Psoas muscle (tissue), 8 donors: ENCODE measurements at regions of chr9 and their contacts with region 1.

Region 1: DNA sequence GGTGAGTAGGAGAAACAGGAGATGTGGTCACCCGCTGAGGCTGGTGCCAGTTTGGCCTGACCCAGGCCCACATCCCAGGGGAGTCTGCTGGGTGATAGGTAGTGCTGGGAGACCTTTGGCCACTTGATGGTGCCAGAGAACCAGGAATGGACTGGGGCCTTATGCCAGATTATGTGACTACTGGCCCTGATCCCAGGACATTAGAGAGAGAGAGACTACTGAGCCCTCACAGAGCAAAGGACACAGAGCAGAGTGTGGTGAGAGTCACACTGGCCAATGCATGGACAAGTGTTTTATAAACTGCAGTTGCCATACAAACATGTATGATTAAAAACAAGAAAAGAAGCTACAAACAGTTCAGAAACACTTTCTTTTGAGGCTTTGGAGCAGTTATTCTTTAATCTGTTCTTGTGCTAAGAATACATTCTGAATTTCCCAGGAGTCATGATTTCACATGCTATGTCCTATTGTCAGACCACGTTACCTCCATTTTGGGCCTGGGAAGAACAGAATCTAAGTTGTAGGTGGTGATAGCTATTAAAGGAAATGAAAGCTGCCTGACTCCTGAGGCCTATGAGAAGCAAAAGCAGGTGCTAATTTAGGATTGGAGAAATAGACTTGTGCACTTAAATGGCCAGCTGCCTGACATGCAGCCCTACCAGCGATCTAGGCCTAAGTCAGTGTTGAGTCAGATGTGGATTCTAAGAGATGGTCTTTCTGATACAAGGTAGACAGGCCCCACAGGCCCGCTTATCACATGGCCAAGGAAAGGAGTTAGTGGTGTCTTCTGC is 32.6 kb upstream of the TMOD1 start:
- DNase-seq: peak; percentile 67 to 86
- ATAC-seq: peak; percentile 98 to 99 (median 98)
- H3K4me3 ChIP-seq: no peak overlapping the region
- H3K27ac ChIP-seq: peak overlapping the region; percentile 77
- H3K4me1 ChIP-seq: peaks cover 13% of the 10 kb centered on the region
- H3K27me3 ChIP-seq: no peaks in the 10 kb centered on the region
- CTCF ChIP-seq: peak; percentile 86

Region 2: DNA sequence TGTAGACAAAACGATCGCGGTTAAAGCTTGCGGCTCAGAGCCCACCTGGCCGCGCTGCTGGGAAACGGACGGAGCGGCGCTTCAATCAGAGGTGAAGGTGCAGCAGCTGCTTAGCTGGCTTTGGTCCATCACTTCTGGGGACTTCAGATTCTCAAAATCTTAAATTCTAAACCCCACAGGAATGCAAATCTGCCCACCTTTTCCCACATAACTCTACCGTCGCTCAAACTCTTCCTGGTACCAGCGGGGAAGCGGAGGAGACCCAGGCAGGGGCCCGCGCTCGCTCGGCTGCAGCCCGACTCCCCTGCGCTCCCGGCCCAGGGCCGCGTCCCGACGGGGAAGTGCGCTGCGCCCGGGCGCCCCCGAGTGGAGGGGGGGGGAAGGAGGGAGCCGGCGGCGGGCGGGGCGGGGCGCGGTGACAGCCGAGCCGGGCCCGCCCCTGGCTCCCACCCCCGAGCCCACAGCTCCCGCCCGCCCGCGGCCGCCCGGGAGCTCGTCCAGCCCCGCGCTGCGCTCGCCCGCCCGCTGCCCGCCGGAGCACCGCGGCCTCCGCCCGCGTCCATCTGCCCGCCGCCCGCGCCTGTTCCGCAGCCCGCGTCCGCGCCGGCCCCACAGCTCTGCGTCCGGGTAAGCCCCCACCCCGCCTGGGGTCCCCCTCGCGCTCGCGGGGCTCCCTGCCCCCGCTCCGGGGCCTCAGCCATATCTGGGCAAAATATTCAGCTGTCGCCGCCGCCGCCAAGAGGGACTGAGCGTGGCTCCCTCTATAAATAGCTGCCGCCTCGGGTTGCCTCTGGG is 32.5 kb after region 1 on chr9 and contains the start of gene TMOD1:
- intact Hi-C with region 1: loop called (anchors 2 to 5 kb)
- DNase-seq: peak; percentile 81 to 90
- ATAC-seq: peak; percentile 81 to 87 (median 82)
- H3K4me3 ChIP-seq: peak within 1 kb of the TSS; percentile 83
- H3K27ac ChIP-seq: peak within 1 kb of the TSS; percentile 96
- H3K4me1 ChIP-seq: peaks cover 33% of the 10 kb centered on the region
- H3K27me3 ChIP-seq: no peaks in the 10 kb centered on the region
- CTCF ChIP-seq: peak; percentile 27
- total RNA-seq, gene TMOD1: 138 to 209 (median 167) TPM

Region 3: GRCh38 chr9:97518909-97519307 is 50.1 kb after region 1 on chr9:
- intact Hi-C with region 1: no loop called
- DNase-seq: peak; percentile 57 to 84
- ATAC-seq: peak; percentile 65 to 85 (median 80)
- H3K4me3 ChIP-seq: peak overlapping the region; percentile 37
- H3K27ac ChIP-seq: peak overlapping the region; percentile 88
- H3K4me1 ChIP-seq: peaks cover 91% of the 10 kb centered on the region
- H3K27me3 ChIP-seq: no peaks in the 10 kb centered on the region
- CTCF ChIP-seq: no peak

Region 4: DNA sequence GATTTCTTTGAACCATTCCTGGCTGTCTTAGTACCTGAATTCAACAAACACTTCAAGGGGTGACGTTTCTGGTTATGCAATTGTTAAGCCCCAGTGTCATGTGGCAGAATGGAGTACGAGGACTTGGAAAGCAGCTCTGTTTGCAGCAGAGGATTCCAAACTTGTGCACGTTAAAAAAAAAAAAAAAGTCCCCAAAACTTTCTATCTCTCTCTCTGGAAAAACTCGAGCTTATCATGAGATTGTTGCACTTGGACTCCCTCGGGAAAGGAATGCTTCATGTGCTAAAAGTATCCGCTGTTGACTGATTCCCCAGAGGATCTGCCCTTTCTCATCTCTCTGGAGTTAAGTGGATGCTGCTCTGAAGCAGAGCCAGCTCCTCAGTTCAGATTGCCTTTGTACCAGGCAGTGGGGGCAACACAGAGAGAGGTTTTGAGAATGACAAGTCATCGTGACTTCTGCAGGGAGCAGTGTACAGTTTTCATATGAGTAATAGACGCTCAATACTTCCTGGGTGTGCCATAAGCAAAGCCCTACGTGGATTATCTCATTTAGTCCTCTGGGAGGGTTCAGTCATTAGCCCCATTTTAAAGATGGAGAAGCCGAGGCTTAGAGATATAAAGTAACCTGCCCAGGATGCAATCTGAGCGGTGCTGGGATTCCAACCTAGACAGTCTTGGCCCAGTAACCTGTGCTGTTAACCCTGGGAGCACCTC is 60.7 kb after region 1 on chr9:
- intact Hi-C with region 1: no loop called
- DNase-seq: peak in 1 of 2 donors; percentile 66
- ATAC-seq: peak; percentile 58 to 79 (median 77)
- H3K4me3 ChIP-seq: no peak overlapping the region
- H3K27ac ChIP-seq: peak overlapping the region; percentile 90
- H3K4me1 ChIP-seq: peaks cover 80% of the 10 kb centered on the region
- H3K27me3 ChIP-seq: no peaks in the 10 kb centered on the region
- CTCF ChIP-seq: no peak

Region 5: GRCh38 chr9:97564291-97565175 is 95.7 kb after region 1 on chr9:
- intact Hi-C with region 1: no loop called
- DNase-seq: peak; percentile 43 to 70
- ATAC-seq: peak; percentile 43 to 64 (median 53)
- H3K4me3 ChIP-seq: no peak overlapping the region
- H3K27ac ChIP-seq: peak overlapping the region; percentile 79
- H3K4me1 ChIP-seq: peaks cover 44% of the 10 kb centered on the region
- H3K27me3 ChIP-seq: no peaks in the 10 kb centered on the region
- CTCF ChIP-seq: no peak

Region 6: GRCh38 chr9:97598461-97599288 is 129.8 kb after region 1 on chr9:
- intact Hi-C with region 1: loop called in 1 of 2 experiments (anchors 5 kb)
- DNase-seq: peak; percentile 66 to 81
- ATAC-seq: peak; percentile 51 to 58 (median 56)
- H3K4me3 ChIP-seq: no peak overlapping the region
- H3K27ac ChIP-seq: peak overlapping the region; percentile 77
- H3K4me1 ChIP-seq: peaks cover 75% of the 10 kb centered on the region
- H3K27me3 ChIP-seq: no peaks in the 10 kb centered on the region
- CTCF ChIP-seq: peak; percentile 83

Region 7: DNA sequence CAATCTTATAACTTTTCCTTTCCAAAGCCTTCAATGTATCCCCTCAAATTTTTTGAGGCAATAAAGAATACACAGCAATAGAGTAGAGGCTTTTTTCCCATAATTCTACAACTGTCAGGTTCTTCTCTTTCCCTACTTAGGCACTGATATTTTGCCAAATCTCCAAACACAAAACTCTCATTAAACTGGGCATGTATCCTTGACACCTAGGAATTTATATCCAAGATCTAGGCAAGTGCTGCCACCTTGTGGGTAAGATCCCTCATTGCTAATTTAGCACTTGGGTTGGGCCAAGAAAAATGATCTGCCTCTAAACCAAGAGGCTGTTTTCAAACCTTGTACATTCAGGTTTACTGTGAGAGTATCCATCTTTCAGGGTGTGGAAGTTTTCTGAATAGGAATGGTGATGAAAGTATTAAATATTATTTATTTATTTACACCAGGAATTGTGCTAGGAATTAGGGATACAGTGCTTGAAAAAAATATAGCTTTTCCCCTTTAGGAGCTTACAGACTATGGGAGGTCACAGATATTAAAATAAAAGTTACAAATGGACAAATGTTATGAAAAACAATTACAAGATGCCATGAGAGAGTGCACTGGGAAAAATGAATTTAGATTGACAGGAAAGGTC is 146.7 kb after region 1 on chr9:
- intact Hi-C with region 1: loop called (anchors 1 to 2 kb)
- DNase-seq: no peak
- ATAC-seq: peak; percentile 67 to 90 (median 78)
- H3K4me3 ChIP-seq: no peak overlapping the region
- H3K27ac ChIP-seq: peak overlapping the region; percentile 18
- H3K4me1 ChIP-seq: peaks cover 14% of the 10 kb centered on the region
- H3K27me3 ChIP-seq: no peaks in the 10 kb centered on the region
- CTCF ChIP-seq: peak; percentile 91

Region 8: GRCh38 chr9:97689401-97689800 is 220.5 kb after region 1 on chr9:
- intact Hi-C with region 1: loop called (anchors 10 kb)
- DNase-seq: no peak
- ATAC-seq: no peak
- H3K4me3 ChIP-seq: no peak overlapping the region
- H3K27ac ChIP-seq: no peak overlapping the region
- H3K4me1 ChIP-seq: peaks cover 12% of the 10 kb centered on the region
- H3K27me3 ChIP-seq: no peaks in the 10 kb centered on the region
- CTCF ChIP-seq: no peak

Region 9: GRCh38 chr9:97696803-97697601 is 228.1 kb after region 1 on chr9 and contains the start of gene XPA:
- intact Hi-C with region 1: loop called in 1 of 2 experiments (anchors 10 kb)
- DNase-seq: peak; percentile 98 to 99
- ATAC-seq: peak; percentile 99
- H3K4me3 ChIP-seq: peak within 1 kb of the TSS; percentile 91
- H3K27ac ChIP-seq: peak within 1 kb of the TSS; percentile 95
- H3K4me1 ChIP-seq: peaks cover 29% of the 10 kb centered on the region
- H3K27me3 ChIP-seq: no peaks in the 10 kb centered on the region
- CTCF ChIP-seq: no peak
- total RNA-seq, gene XPA: 9.0 to 17.6 (median 10.9) TPM

Region 10: DNA sequence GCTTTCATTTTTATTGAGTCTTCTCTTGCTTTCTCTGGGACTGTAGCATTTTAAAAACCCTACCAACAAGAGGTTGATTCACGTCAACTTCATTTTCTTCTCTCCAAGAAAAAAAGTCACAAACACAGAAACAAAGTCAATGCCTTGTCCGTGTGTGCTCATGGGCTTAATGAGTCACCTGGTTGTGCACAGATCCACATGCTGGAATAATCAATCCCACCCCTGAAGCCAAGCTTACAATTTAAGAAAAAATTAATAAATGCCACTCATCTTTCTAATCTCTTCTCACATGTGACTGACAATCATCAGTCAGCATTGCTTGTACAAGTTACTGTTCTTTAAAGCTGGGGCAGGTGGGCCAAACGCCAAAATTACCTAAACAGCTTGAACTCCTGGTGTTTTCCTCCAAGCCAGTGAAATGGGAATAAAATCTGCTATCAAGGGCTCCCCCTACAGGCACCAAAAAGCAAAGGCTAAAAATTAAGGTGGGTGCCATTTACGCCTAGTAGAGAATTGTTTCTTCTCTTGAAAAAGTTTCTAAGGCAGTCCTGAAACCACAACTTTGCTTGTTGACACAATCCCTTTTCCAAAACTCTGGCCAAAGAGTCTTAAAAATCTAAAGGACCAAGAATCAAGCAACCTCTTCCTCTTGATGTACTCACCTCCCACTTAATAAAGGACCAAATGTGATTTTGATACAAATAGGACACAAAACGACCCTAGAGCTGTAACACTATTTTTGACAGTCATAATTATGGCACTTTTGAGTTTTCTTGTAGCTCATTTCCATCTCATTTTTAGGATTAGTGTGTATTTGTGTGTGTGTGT is 432.1 kb after region 1 on chr9:
- intact Hi-C with region 1: loop called in 1 of 2 experiments (anchors 10 kb)
- DNase-seq: no peak
- ATAC-seq: peak in 2 of 4 donors; percentile 55 to 71
- H3K4me3 ChIP-seq: no peak overlapping the region
- H3K27ac ChIP-seq: no peak overlapping the region
- H3K4me1 ChIP-seq: peaks cover 2% of the 10 kb centered on the region
- H3K27me3 ChIP-seq: no peaks in the 10 kb centered on the region
- CTCF ChIP-seq: peak; percentile 70